ENCODE measurements at regions of chr4 and their contacts with region 1.

Region 1: DNA sequence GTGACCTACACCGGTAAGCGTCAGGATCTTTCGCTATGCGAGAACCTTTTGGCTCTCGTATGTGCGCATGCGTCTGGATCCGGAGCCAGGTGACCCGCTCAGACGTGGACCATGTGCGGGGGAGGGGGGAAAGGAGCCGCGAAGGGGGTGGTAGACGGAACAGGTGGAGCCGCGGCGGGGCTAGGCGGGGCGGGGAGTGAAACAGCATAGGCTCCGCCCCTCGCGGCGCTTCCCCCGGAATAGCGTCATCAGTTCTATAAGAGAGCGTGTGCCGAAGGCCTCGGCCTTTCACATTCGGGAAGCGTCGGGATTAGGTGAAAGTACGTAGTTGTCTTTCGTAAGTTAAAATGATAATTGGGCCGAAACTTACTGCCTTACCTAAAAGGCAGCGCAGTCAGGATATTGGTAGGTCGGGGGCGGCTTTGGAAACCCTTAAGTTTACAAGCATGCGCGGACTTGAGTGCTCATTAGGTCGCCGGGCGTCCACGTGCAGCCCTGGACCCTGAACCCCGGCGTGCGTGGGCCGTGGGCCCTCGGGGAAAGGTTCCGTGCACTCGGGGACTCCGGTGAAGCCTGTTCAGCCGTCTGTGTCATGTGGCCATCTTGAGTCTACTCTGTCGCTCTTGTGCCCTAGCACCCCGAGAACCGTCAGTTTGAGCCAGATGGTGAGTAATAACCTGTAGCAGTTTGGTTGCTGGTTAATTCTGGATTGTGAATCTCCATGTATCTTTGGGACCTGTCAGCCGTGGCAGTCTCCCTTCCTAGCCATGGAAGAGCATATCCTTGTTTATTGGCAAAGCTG is 74.1 kb downstream of the PRSS12 start:
- DNase-seq: peak; percentile 93
- ATAC-seq: peak; percentile 97 to 100 (median 99)
- H3K4me3 ChIP-seq: peak overlapping the region; percentile 54 to 93 (median 80)
- H3K27ac ChIP-seq: peak overlapping the region; percentile 82 to 98 (median 93)
- H3K4me1 ChIP-seq: peaks cover 3 to 39% (median 26%) of the 10 kb centered on the region in 9 donors
- H3K27me3 ChIP-seq: no peaks in the 10 kb centered on the region
- CTCF ChIP-seq: no peak

Region 2: DNA sequence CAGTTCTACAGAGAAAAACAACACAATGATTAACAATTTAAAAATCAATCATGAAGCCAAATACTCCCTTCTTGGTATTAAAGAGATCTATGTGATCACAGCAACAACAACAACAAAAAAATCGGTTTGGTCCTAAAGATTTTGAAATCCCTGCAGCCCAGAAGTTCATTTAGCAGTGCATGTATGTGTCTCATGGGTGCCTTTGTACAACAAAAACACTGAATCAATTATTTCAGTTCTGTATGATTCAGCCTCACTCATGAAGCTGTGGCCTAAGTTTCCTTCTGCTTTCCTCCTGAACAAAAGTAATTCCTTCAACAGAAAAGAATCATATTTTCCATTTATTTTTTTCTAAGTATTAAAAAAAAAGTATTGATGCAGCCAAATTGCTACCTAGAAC is 637.8 kb before region 1 on chr4:
- intact Hi-C with region 1: no loop called
- DNase-seq: no peak
- ATAC-seq: no peak
- H3K4me3 ChIP-seq: no peak overlapping the region
- H3K27ac ChIP-seq: no peak overlapping the region
- H3K4me1 ChIP-seq: no peaks in the 10 kb centered on the region
- H3K27me3 ChIP-seq: no peaks in the 10 kb centered on the region
- CTCF ChIP-seq: no peak

Region 3: DNA sequence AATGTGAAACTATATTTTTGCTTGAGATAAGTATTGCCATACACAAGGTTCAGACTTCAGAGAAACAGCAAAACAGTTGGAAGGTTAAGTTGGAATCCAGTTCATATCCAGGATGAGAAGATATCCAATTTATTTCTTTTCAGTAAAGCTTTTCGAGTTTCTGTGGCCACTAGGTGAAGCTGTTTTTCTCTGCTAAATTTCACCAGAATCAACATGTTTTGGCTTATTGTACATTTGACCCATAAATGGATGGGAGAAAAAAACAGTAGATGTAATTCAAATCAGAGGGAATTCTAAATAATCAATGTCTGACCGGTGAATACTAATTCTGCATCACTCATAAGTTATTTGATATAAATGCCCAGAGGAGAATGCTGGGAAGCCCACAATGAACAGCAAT is 397.5 kb after region 1 on chr4:
- intact Hi-C with region 1: loop called in 4 of 10 experiments (anchors 5 to 10 kb)
- DNase-seq: no peak
- ATAC-seq: no peak
- H3K4me3 ChIP-seq: no peak overlapping the region
- H3K27ac ChIP-seq: no peak overlapping the region
- H3K4me1 ChIP-seq: no peaks in the 10 kb centered on the region
- H3K27me3 ChIP-seq: no peaks in the 10 kb centered on the region
- CTCF ChIP-seq: no peak

Region 4: GRCh38 chr4:118684873-118685811 is 406.5 kb after region 1 on chr4 and contains the start of gene METTL14:
- intact Hi-C with region 1: loop called in 3 of 10 experiments (anchors 5 to 10 kb)
- DNase-seq: peak; percentile 93 to 94
- ATAC-seq: peak; percentile 96 to 99 (median 98)
- H3K4me3 ChIP-seq: peak within 1 kb of the TSS; percentile 49 to 82 (median 72)
- H3K27ac ChIP-seq: peak within 1 kb of the TSS; percentile 32 to 94 (median 91)
- H3K4me1 ChIP-seq: peaks cover 9 to 25% (median 17%) of the 10 kb centered on the region in 9 donors
- H3K27me3 ChIP-seq: no peaks in the 10 kb centered on the region
- CTCF ChIP-seq: peak in 4 of 9 donors; percentile 27 to 37 (median 34)
- total RNA-seq, gene METTL14: 28.4 to 37.2 (median 32.7) TPM

Measured in heart right ventricle (tissue), 16 donors.